ENCODE measurements at regions of chr9 and their contacts with region 1.

Region 1: GRCh38 chr9:89497978-89498851 is at the start of gene SEMA4D:
- DNase-seq: peak; percentile 76 to 79
- ATAC-seq: peak; percentile 78 to 84
- H3K4me3 ChIP-seq: peak within 1 kb of the TSS; percentile 66 to 92 (median 78)
- H3K27ac ChIP-seq: peak within 1 kb of the TSS; percentile 85 to 96 (median 90)
- H3K4me1 ChIP-seq: peaks cover 25 to 37% of the 10 kb centered on the region in 2 donors
- H3K27me3 ChIP-seq: no peaks in the 10 kb centered on the region
- CTCF ChIP-seq: no peak
- POLR2A ChIP-seq: peak; percentile 7 to 47
- total RNA-seq, gene SEMA4D: 23.6 to 77.0 (median 41.3) TPM

Region 2: GRCh38 chr9:89256642-89257041 is 241.6 kb before region 1 on chr9:
- in situ Hi-C with region 1: no loop called
- intact Hi-C with region 1: no loop called
- DNase-seq: no peak
- ATAC-seq: no peak
- H3K4me3 ChIP-seq: no peak overlapping the region
- H3K27ac ChIP-seq: no peak overlapping the region
- H3K4me1 ChIP-seq: no peaks in the 10 kb centered on the region
- H3K27me3 ChIP-seq: no peaks in the 10 kb centered on the region
- CTCF ChIP-seq: no peak
- POLR2A ChIP-seq: no peak

Region 3: GRCh38 chr9:89310475-89311346 is 187.5 kb before region 1 on chr9 and contains the start of gene CKS2:
- in situ Hi-C with region 1: no loop called
- intact Hi-C with region 1: loop called (anchors 2 kb)
- DNase-seq: peak; percentile 100
- ATAC-seq: peak; percentile 97
- H3K4me3 ChIP-seq: peak within 1 kb of the TSS; percentile 76 to 98 (median 92)
- H3K27ac ChIP-seq: peak within 1 kb of the TSS; percentile 95 to 100 (median 99)
- H3K4me1 ChIP-seq: peaks cover 24 to 34% of the 10 kb centered on the region in 2 donors
- H3K27me3 ChIP-seq: no peaks in the 10 kb centered on the region
- CTCF ChIP-seq: peak in 1 of 5 experiments; percentile 20
- POLR2A ChIP-seq: peak; percentile 89 to 94
- total RNA-seq, gene CKS2: 6.5 to 13.2 (median 6.9) TPM

Region 4: GRCh38 chr9:89508951-89509615 is 10.9 kb after region 1 on chr9:
- in situ Hi-C with region 1: no loop called
- intact Hi-C with region 1: no loop called
- DNase-seq: no peak
- ATAC-seq: no peak
- H3K4me3 ChIP-seq: no peak overlapping the region
- H3K27ac ChIP-seq: no peak overlapping the region
- H3K4me1 ChIP-seq: peaks cover 0 to 8% of the 10 kb centered on the region in 2 donors
- H3K27me3 ChIP-seq: no peaks in the 10 kb centered on the region
- CTCF ChIP-seq: no peak
- POLR2A ChIP-seq: no peak

Region 5: DNA sequence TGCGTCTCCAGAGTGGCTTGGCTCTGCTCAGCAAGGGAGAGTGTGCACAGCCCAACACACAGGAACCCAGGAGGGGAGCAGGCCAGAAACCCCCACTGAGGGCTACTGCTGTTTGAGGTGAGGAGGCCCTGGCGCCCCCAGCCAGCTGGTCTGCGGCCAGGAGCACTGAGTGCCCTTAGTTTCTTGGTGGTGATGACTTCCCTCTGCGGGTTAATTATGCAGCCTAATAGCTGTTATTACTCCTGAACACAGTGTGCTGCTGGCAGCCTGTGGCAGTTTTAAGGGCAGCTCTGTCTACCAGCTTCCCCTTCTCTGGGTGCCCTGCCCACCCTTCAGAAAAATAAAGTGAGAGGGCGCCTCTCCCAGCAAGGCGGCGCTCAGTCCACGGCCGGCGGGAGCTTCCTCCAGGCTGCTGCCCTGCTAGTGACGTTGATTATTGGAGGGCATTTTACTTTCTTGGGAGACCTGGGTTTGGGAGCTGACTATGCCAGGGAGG is 125.8 kb after region 1 on chr9:
- in situ Hi-C with region 1: no loop called
- intact Hi-C with region 1: no loop called
- DNase-seq: peak; percentile 41 to 72
- ATAC-seq: peak; percentile 21 to 40
- H3K4me3 ChIP-seq: peak overlapping the region in 3 of 4 donors; percentile 12 to 32 (median 28)
- H3K27ac ChIP-seq: peak overlapping the region; percentile 88 to 94 (median 90)
- H3K4me1 ChIP-seq: peaks cover 55 to 59% of the 10 kb centered on the region in 2 donors
- H3K27me3 ChIP-seq: no peaks in the 10 kb centered on the region
- CTCF ChIP-seq: peak in 2 of 5 experiments; percentile 39 to 49
- POLR2A ChIP-seq: no peak

Region 6: DNA sequence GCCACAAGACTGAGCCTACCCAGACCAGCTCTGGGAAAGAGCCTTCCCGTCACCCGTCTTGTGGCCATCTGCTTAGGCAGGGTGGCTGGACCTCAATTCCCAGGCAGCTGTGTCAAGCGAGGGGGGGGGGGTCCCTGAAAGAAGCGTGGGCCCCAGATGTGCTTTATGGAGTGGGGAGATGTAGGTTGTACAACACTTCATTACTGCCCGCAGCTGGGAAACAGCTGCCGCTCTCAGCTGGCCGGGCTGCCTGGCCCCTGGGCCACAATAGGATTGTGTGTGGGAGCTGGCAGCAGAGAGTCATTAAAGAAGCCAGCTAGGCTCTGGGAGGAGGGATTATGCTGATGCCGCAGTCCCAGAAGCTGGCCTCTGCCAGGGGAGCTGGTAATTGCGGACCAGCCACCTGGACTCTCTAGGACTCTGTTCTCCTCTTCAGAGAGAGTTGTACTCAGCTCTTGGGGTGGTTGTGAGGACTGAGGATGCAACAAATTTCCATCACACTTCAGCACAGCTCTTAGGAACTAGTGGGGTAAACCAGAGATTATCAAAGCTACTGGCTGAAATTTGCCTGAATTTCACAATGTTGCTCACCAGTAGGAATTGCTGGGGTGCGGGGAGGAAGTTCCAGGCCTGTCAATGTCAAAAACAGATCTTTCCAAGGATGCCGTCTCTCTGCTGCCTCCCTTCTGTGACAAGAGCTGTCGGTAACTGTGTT is 252.1 kb after region 1 on chr9:
- in situ Hi-C with region 1: no loop called
- intact Hi-C with region 1: loop called (anchors 5 kb)
- DNase-seq: peak in 1 of 2 donors; percentile 32
- ATAC-seq: peak; percentile 30 to 34
- H3K4me3 ChIP-seq: no peak overlapping the region
- H3K27ac ChIP-seq: peak overlapping the region in 3 of 4 donors; percentile 11 to 28 (median 26)
- H3K4me1 ChIP-seq: peaks cover 2 to 5% of the 10 kb centered on the region in 2 donors
- H3K27me3 ChIP-seq: no peaks in the 10 kb centered on the region
- CTCF ChIP-seq: no peak
- POLR2A ChIP-seq: no peak